Esophagus muscularis mucosa (tissue), 4 donors: ENCODE measurements at regions of chr7 and their contacts with region 1.

Region 1: DNA sequence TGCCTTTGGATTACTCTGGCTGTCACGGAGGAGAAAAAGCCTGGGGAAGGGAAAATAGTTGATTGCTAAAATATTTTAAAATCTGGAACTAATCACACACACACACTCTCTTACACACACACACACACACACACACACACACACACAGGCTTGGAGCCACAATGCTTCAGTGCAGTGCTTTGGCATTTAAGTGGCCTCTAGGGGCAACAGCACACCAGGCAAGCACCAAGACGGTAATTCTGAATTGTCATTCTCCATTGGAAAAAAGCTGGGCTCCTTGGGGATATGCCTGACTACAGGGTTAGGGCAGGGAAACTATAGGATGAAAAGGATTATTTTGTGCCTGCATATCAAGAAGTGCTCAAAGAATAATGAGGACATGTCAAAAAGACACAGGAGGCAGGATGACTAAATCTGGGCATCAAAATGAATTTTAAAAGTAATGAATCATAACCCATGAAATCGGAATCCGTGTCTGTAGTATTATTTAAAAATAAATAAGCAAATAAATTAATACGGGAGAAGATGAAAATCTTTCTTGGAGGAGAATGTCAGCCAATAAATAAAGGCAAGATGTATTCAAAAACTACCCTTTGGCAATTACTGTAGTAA is 30.4 kb upstream of the DDC start:
- DNase-seq: no peak
- H3K4me3 ChIP-seq: no peak overlapping the region
- H3K27ac ChIP-seq: no peak overlapping the region
- H3K4me1 ChIP-seq: peaks cover 0 to 9% (median 1%) of the 10 kb centered on the region in 4 donors
- H3K27me3 ChIP-seq: no peaks in the 10 kb centered on the region
- CTCF ChIP-seq: peak; percentile 41 to 58 (median 47)
- EP300 ChIP-seq: no peak
- POLR2A ChIP-seq: no peak

Region 2: GRCh38 chr7:50431316-50431715 is 164.3 kb before region 1 on chr7:
- intact Hi-C with region 1: no loop called
- DNase-seq: no peak
- H3K4me3 ChIP-seq: no peak overlapping the region
- H3K27ac ChIP-seq: no peak overlapping the region
- H3K4me1 ChIP-seq: no peaks in the 10 kb centered on the region
- H3K27me3 ChIP-seq: no peaks in the 10 kb centered on the region
- CTCF ChIP-seq: no peak
- EP300 ChIP-seq: no peak
- POLR2A ChIP-seq: no peak

Region 3: DNA sequence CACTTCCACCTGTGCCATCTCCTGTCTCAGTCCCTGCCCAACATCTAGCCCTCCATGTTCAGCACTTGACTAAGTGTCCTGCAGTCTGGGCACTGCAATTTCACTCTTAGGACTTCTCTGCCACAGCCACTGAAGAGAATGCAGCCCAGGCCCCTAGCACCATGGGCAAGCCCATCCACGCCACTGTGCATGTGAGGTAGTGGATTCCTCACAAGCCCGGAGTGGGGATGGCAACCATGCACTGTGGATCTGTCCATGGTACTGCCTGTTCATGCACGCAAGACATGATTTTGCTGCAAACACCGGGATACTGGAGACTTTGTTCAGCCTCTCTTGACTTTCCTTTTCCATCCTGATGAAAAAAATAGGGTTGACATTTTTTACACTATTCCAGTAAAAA is 42.7 kb before region 1 on chr7:
- intact Hi-C with region 1: no loop called
- DNase-seq: no peak
- H3K4me3 ChIP-seq: no peak overlapping the region
- H3K27ac ChIP-seq: no peak overlapping the region
- H3K4me1 ChIP-seq: peaks cover 0 to 11% (median 5%) of the 10 kb centered on the region in 4 donors
- H3K27me3 ChIP-seq: peaks cover 0 to 12% (median 0%) of the 10 kb centered on the region in 4 donors
- CTCF ChIP-seq: no peak
- EP300 ChIP-seq: no peak
- POLR2A ChIP-seq: no peak

Region 4: DNA sequence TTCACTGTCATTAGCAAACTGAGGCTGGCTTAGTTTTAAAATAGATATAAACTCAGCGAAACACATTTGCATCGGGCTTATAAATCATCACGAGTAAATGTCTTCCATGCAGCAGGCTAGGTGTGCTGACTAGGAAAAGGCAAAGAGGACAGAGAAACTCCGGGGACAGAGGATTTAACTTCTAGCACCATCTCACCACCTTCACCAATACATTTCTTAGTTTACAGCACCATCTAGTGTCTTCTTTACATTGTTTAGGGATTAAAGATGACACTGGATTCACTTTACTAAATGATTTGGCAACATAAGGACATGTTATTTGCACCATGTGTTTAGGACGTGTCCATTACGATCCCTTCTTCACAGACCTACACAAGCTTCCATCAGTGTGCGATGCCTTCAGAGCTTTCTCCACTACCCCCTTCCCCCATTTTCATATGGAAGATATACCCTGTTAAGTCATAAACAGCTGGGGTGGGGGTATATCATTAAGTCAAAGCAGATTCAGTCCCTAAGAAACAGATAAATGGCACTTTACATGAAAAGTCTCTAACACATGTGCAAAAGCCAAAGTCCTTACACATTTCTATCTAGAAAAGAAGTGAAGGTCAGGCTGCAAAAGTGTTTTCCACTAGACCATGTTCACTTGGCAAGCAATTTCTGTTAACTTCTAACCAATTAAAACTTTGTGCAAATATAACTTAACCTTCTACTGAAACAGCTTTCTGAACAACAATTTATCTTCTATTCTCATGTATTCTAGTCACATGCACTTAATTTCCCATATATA is 83.8 kb after region 1 on chr7:
- intact Hi-C with region 1: loop called (anchors 5 kb)
- DNase-seq: no peak
- H3K4me3 ChIP-seq: no peak overlapping the region
- H3K27ac ChIP-seq: no peak overlapping the region
- H3K4me1 ChIP-seq: peaks cover 60 to 80% (median 76%) of the 10 kb centered on the region in 4 donors
- H3K27me3 ChIP-seq: no peaks in the 10 kb centered on the region
- CTCF ChIP-seq: peak; percentile 37 to 57 (median 46)
- EP300 ChIP-seq: no peak
- POLR2A ChIP-seq: no peak

Region 5: GRCh38 chr7:51154201-51154600 is 558.6 kb after region 1 on chr7:
- intact Hi-C with region 1: loop called (anchors 10 kb)
- DNase-seq: no peak
- H3K4me3 ChIP-seq: no peak overlapping the region
- H3K27ac ChIP-seq: no peak overlapping the region
- H3K4me1 ChIP-seq: peaks cover 0 to 8% (median 7%) of the 10 kb centered on the region in 4 donors
- H3K27me3 ChIP-seq: no peaks in the 10 kb centered on the region
- CTCF ChIP-seq: no peak
- EP300 ChIP-seq: no peak
- POLR2A ChIP-seq: no peak